ENCODE measurements at regions of chr6 and their contacts with region 1.

Region 1: DNA sequence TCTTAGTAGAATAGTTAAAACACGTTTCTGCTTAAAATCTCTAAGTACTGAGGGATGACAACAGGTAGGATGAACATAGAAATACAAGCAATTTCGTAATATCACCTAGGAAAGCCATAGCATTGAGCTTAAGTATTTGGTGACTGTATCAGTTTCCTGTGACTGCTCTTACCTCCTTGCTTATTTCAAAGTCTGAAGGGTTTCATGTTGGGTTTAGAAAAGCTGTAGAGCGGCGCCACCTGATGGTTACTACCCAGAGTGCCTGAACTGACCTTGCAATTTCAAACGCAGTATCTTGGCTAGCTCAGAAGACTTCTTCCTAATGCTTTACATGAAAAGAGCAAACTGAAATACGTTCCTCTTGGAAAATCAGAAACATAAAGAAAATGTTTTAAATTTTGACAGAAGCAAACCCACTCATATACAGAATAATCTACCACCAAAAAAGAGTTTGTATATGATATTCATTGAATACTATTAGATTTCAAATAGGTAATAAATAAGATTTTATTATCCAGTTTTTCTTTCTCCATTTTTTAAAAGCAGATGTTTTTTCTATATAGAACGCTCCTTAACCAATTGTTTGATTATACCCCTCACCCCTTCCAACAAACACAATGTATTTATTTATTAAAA is 82.3 kb upstream of the RIPOR2 start:
- DNase-seq: peak; percentile 59 to 83
- H3K4me3 ChIP-seq: 0 out of 2 replicates have a peak overlapping the region, but pooled peaks have one; percentile 6
- H3K27ac ChIP-seq: peak overlapping the region; percentile 74
- H3K4me1 ChIP-seq: peaks cover 38% of the 10 kb centered on the region
- H3K27me3 ChIP-seq: no peaks in the 10 kb centered on the region
- CTCF ChIP-seq: peak; percentile 88

Region 2: GRCh38 chr6:24581084-24581669 is 436.9 kb before region 1 on chr6:
- CTCF ChIA-PET with region 1: interaction called, 4 read pairs
- POLR2A ChIA-PET with region 1: no interaction called
- intact Hi-C with region 1: loop called (anchors 2 kb)
- DNase-seq: peak in 1 of 2 experiments; percentile 60
- H3K4me3 ChIP-seq: no peak overlapping the region
- H3K27ac ChIP-seq: no peak overlapping the region
- H3K4me1 ChIP-seq: peaks cover 26% of the 10 kb centered on the region
- H3K27me3 ChIP-seq: no peaks in the 10 kb centered on the region
- CTCF ChIP-seq: peak; percentile 88

Region 3: GRCh38 chr6:24766680-24767462 is 251.2 kb before region 1 on chr6:
- CTCF ChIA-PET with region 1: no interaction called
- POLR2A ChIA-PET with region 1: no interaction called
- intact Hi-C with region 1: loop called (anchors 1 kb)
- DNase-seq: peak in 1 of 2 experiments; percentile 52
- H3K4me3 ChIP-seq: no peak overlapping the region
- H3K27ac ChIP-seq: no peak overlapping the region
- H3K4me1 ChIP-seq: no peaks in the 10 kb centered on the region
- H3K27me3 ChIP-seq: no peaks in the 10 kb centered on the region
- CTCF ChIP-seq: peak; percentile 75

Region 4: DNA sequence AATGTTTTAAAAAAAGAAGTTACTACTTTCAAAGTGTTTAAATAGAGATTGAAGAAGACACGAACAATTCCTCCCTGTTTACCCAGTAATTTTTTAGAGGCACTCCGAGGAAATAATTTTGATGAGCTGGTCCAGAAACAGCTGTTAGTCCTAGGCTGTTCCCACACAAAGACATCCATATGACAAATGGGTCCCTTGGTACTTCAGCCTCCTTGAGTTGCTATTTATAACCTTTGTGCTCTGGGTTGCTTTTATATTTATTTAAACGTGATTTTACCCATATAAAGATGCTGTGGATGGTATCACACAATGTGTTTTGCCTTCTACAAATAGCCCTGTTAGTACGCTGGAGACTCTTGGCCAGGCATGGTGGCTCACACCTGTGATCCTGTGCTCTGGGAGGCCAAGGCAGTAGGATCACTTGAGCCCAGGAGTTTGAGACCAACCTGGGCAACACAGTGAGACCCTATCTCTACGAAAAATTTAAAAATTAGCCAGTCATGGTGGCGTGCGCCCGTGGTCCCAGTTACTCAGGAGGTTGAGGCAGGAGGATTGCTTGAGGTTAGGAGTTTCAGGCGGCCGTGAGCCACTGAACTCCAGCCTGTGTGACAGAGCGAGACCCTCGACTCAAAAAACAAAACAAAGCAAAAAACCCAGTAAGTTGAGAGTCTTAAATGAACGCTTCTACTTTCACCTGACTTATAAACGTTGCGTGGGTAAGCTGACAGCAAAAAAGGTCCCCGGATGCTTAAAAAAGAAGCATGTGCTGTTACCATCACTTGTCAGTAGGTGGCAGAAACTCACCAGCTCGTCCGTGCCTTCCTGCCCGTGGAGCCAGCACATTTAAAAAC is 162.4 kb before region 1 on chr6:
- CTCF ChIA-PET with region 1: interaction called, 16 read pairs
- POLR2A ChIA-PET with region 1: no interaction called
- intact Hi-C with region 1: loop called (anchors 1 kb)
- DNase-seq: peak; percentile 44 to 58
- H3K4me3 ChIP-seq: no peak overlapping the region
- H3K27ac ChIP-seq: no peak overlapping the region
- H3K4me1 ChIP-seq: peaks cover 26% of the 10 kb centered on the region
- H3K27me3 ChIP-seq: no peaks in the 10 kb centered on the region
- CTCF ChIP-seq: peak; percentile 89

Region 5: DNA sequence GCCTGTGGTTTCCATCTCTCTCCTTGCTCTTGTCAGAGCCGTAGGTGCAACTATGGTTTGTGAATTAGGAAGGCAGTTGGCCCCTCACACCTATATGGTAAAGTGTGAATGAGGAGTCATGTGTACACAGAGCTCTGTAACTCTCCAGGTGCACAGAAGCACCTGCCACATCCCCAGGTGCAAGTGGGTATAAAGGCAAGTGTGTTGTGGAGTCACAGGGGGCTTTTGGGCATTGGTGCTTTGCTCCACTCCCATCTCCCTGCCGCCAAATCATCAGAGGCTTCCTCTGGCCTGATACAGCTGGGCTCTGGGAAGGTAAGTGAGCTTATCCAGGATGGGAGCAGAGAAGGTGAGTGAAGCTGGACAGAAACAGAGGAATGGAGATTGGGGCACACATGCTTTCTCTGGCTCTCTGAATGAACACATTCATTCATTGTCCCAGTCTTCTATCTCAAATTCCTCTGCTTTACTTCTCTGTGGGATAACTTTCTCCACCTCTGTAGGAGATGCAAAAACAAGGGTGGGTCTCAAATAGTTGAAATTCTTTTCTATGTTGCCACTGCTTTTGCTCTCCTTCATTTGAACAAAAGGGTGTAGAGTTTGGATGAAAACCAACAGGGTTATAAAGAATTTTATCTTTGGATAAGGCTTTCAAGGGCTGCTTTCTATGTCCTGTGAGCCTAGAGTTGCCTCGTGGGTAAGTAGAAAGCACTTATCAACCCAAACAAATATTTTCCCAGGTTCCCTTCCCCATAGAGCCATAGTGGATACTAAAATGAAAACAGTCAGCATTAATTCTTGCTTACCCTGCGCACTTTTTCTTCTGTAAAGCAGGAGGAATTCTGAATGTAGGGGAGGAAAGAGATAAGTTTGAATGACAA is 37.3 kb before region 1 on chr6:
- CTCF ChIA-PET with region 1: interaction called, 3 read pairs
- POLR2A ChIA-PET with region 1: no interaction called
- intact Hi-C with region 1: loop called (anchors 1 kb)
- DNase-seq: peak; percentile 44 to 88
- H3K4me3 ChIP-seq: no peak overlapping the region
- H3K27ac ChIP-seq: peak overlapping the region; percentile 64
- H3K4me1 ChIP-seq: peaks cover 35% of the 10 kb centered on the region
- H3K27me3 ChIP-seq: no peaks in the 10 kb centered on the region
- CTCF ChIP-seq: no peak

Measured in PC-9 (cell line).